ENCODE measurements at regions of chr10 and their contacts with region 1.

Region 1: GRCh38 chr10:100229819-100230422 is 525 bp upstream of the CHUK start:
- DNase-seq: no peak
- ATAC-seq: no peak
- H3K4me3 Mint-ChIP-seq: peak overlapping the region; percentile 84
- H3K27ac Mint-ChIP-seq: peak overlapping the region; percentile 78
- H3K4me1 Mint-ChIP-seq: peaks cover 19% of the 10 kb centered on the region
- H3K27me3 Mint-ChIP-seq: no peaks in the 10 kb centered on the region

Region 2: DNA sequence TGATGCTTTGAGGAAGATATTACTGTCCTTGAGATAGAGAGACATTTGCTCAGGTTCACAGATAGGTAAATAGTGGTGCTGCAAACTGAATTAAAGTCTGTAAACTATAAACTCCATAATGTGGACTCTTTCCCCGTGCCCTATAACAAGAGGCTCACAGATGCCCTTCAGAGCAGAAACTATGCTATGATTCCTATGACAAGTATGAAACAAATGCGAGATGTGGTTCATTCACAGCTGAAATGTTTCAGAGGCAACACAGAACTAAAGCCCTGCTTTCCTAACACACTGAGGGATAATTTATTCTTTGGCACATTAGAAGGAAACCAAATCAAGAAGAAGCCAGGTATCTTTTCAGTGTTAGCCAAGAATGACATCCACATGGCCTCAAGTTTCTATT is 13.9 kb before region 1 on chr10:
- CTCF ChIA-PET with region 1: interaction called, 10 read pairs
- POLR2A ChIA-PET with region 1: interaction called, 5 read pairs
- intact Hi-C with region 1: no loop called
- DNase-seq: no peak
- ATAC-seq: no peak
- H3K4me3 Mint-ChIP-seq: no peak overlapping the region
- H3K27ac Mint-ChIP-seq: no peak overlapping the region
- H3K4me1 Mint-ChIP-seq: no peaks in the 10 kb centered on the region
- H3K27me3 Mint-ChIP-seq: no peaks in the 10 kb centered on the region

Region 3: GRCh38 chr10:100267237-100268104 is 37.5 kb after region 1 on chr10 and contains the start of gene CWF19L1:
- CTCF ChIA-PET with region 1: no interaction called
- POLR2A ChIA-PET with region 1: no interaction called
- intact Hi-C with region 1: loop called in 1 of 2 experiments (anchors 1 kb)
- DNase-seq: peak; percentile 86
- ATAC-seq: peak; percentile 92
- H3K4me3 Mint-ChIP-seq: peak within 1 kb of the TSS; percentile 97
- H3K27ac Mint-ChIP-seq: peak within 1 kb of the TSS; percentile 99
- H3K4me1 Mint-ChIP-seq: peaks cover 22% of the 10 kb centered on the region
- H3K27me3 Mint-ChIP-seq: no peaks in the 10 kb centered on the region
- total RNA-seq, gene CWF19L1: 43.4 to 47.5 TPM

Region 4: DNA sequence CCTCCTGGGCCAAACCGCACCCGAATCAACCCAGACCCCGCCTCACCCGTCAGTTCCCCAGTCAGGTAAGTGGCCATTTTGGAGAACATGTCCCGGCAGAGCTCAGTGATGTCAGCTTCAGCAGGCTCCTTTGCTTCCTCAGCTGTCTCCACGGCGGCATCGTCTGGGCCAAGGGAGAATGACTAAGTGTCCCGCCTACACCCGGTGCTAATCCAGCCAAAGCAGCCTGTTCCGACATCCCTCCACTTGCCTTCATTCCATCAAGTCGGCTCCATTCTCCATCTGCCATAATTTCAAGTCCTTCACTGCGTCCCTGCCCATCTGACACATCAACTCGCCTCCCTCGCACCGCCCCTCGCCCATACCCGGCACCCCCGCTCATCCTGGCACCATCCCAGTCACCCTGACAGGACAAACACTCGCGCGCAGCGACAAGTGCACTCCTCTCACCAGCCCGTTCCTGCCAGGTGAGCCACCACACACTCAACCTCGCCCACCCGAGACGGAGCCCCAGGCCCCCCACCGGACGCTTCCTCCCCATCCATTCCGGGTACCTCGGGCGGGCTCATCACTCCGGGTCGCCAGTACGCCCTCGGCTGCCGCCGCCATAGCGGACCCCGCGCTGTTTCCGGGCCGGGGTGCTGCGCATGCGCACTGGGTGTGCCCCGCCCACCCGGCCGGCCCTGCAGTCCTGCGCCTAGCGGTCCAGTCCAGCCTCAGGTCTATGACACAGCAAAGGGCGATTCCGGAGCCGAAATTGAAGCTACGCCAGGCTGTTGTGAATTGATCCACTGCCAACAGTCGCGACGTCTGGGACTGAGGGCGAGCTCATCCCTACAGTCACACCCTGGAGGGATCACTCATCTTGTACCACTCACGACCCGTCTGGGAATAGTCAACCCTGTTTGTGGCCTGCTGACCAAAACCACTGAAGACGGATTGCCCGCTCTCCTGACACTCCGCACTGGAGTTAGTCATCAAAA is 56.4 kb after region 1 on chr10 and contains the start of gene BLOC1S2:
- CTCF ChIA-PET with region 1: no interaction called
- POLR2A ChIA-PET with region 1: interaction called, 4 read pairs
- intact Hi-C with region 1: loop called in 1 of 2 experiments (anchors 1 kb)
- DNase-seq: peak; percentile 91
- ATAC-seq: peak; percentile 89
- H3K4me3 Mint-ChIP-seq: peak within 1 kb of the TSS; percentile 100
- H3K27ac Mint-ChIP-seq: peak within 1 kb of the TSS; percentile 100
- H3K4me1 Mint-ChIP-seq: peaks cover 24% of the 10 kb centered on the region
- H3K27me3 Mint-ChIP-seq: no peaks in the 10 kb centered on the region
- total RNA-seq, gene BLOC1S2: 45.0 to 45.7 TPM

Region 5: GRCh38 chr10:100670828-100671479 is 441.0 kb after region 1 on chr10:
- CTCF ChIA-PET with region 1: no interaction called
- POLR2A ChIA-PET with region 1: no interaction called
- intact Hi-C with region 1: no loop called
- DNase-seq: peak; percentile 81
- ATAC-seq: peak; percentile 95
- H3K4me3 Mint-ChIP-seq: no peak overlapping the region
- H3K27ac Mint-ChIP-seq: no peak overlapping the region
- H3K4me1 Mint-ChIP-seq: peaks cover 3% of the 10 kb centered on the region
- H3K27me3 Mint-ChIP-seq: peaks cover 64% of the 10 kb centered on the region